ENCODE measurements at regions of chrX and their contacts with region 1.

Region 1: DNA sequence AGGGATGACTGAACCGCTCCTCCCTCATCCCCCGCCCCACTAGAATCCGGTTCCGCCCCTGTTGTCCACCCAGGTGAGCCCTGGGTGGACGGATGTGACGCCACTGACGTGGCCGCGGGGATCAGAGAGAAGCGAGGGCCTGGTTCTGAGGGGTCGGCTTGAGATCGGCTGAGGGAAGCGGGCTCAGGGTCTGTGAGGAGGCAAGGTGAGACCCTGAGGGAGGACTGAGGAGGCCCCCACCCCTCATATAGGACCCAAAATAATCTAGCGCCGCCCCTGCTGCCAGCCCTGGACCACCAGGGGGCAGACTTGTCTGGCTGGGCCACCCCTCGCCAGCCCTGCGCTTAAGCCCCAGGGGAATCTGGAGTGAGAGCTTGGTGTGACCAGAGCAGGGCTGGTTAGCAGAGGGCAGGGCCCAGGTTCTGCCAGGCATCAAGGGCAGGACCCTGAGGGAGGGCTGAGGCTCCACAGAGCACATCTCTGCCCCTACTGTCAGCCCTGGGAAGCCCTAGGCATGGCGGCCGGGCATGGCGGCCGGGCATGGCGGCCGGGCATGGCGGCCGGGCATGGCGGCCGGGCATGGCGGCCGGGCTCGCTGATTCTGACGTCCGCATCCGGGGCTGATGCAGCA is at the start of gene MAGEA8:
- DNase-seq: peak; percentile 63 to 69 (median 66)
- ATAC-seq: peak; percentile 93
- H3K4me3 ChIP-seq: peak within 1 kb of the TSS; percentile 46
- H3K27ac ChIP-seq: peak within 1 kb of the TSS; percentile 61; the same call in 2 of the 3 replicates
- H3K4me1 ChIP-seq: peaks cover 0 to 17% of the 10 kb centered on the region in 2 experiments; a peak in 3 of 5 replicates
- H3K27me3 ChIP-seq: no peaks in the 10 kb centered on the region
- CTCF ChIP-seq: peak; percentile 71 to 81 (median 74)
- EP300 ChIP-seq: no peak
- POLR2A ChIP-seq: 0 out of 2 replicates have a peak, but pooled peaks have one; percentile 46
- RAD21 ChIP-seq: peak; percentile 50 to 63
- polyA plus RNA-seq, gene MAGEA8: 0.49 to 1.7 TPM

Region 2: DNA sequence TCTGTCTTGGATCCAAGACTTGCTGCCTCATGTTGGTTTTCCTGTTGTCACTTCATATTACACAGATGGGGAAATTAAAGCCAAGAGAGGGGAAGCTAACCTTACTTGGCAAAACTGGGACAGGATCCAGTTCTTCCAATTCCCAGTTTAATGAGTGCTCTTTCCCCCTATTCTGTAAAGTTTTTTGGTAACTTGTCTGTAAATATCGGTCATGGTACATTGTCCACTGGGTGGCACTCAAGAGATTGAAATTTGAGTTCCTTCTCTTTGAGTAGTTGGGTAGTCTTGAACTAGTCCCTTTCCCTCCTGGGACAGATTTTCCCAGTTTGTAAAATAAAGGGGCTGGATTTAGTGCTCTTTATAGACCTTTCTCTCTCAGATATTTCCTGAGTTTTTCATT is 69.5 kb after region 1 on chrX:
- CTCF ChIA-PET with region 1: no interaction called
- POLR2A ChIA-PET with region 1: no interaction called
- in situ Hi-C with region 1: no loop called
- intact Hi-C with region 1: loop called (anchors 5 kb)
- DNase-seq: peak; percentile 12 to 48 (median 24)
- ATAC-seq: peak; percentile 69; the same call in 2 of the 3 replicates
- H3K4me3 ChIP-seq: no peak overlapping the region
- H3K27ac ChIP-seq: no peak overlapping the region
- H3K4me1 ChIP-seq: no peaks in the 10 kb centered on the region
- H3K27me3 ChIP-seq: no peaks in the 10 kb centered on the region
- CTCF ChIP-seq: peak; percentile 31 to 61 (median 45); a peak in 5 of 6 replicates
- EP300 ChIP-seq: no peak
- POLR2A ChIP-seq: no peak
- RAD21 ChIP-seq: peak; percentile 24 to 53; a peak in 3 of 4 replicates

Region 3: DNA sequence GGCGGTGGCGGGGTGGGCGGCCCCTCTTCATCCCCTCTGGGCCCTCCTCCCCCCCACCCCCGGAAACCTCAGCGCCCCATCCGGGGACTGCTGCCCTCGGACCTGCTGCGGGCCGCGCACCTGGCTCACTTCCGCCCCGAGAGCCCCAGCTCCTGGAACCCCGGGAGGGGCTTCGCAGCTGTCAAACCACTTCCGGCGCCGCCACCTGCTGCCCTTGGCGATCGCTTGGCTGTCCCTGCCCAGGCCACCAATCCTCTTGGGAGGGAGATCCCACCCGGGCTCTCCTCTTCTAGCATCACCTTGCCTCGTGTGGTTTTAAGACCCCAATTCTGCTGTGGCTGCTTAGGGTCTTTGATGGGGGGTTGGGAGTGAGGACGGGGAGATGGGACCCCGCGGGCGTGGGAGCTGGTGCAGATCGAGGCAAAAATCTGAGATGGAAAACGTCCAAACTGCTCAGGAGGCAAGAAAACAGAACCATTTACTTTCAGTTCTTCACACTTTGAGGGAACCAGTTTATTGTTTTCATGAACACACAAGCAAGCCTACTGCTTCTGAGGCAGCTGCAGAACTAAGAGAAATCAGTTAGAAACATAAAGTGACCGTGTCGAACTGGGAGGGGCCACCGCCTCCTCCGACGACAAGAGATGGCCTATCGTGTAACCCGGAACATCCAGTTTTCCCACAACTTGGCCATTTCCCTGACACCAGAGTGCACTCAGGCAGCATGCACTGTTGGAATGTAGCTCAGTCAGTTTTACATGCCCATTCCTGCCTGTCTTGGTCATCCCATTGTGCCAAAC is 812.8 kb after region 1 on chrX:
- CTCF ChIA-PET with region 1: no interaction called
- POLR2A ChIA-PET with region 1: no interaction called
- in situ Hi-C with region 1: no loop called
- intact Hi-C with region 1: loop called (anchors 10 kb)
- DNase-seq: peak; percentile 75 to 87 (median 84)
- ATAC-seq: peak; percentile 82
- H3K4me3 ChIP-seq: peak overlapping the region; percentile 50
- H3K27ac ChIP-seq: peak overlapping the region; percentile 19; the same call in 2 of the 3 replicates
- H3K4me1 ChIP-seq: peaks cover 11 to 17% of the 10 kb centered on the region in 2 experiments; a peak in 4 of 5 replicates
- H3K27me3 ChIP-seq: no peaks in the 10 kb centered on the region
- CTCF ChIP-seq: no peak
- EP300 ChIP-seq: no peak
- POLR2A ChIP-seq: no peak
- RAD21 ChIP-seq: no peak